Mammary epithelial cell (primary cell): ENCODE measurements at regions of chr19 and their contacts with region 1.

Region 1: DNA sequence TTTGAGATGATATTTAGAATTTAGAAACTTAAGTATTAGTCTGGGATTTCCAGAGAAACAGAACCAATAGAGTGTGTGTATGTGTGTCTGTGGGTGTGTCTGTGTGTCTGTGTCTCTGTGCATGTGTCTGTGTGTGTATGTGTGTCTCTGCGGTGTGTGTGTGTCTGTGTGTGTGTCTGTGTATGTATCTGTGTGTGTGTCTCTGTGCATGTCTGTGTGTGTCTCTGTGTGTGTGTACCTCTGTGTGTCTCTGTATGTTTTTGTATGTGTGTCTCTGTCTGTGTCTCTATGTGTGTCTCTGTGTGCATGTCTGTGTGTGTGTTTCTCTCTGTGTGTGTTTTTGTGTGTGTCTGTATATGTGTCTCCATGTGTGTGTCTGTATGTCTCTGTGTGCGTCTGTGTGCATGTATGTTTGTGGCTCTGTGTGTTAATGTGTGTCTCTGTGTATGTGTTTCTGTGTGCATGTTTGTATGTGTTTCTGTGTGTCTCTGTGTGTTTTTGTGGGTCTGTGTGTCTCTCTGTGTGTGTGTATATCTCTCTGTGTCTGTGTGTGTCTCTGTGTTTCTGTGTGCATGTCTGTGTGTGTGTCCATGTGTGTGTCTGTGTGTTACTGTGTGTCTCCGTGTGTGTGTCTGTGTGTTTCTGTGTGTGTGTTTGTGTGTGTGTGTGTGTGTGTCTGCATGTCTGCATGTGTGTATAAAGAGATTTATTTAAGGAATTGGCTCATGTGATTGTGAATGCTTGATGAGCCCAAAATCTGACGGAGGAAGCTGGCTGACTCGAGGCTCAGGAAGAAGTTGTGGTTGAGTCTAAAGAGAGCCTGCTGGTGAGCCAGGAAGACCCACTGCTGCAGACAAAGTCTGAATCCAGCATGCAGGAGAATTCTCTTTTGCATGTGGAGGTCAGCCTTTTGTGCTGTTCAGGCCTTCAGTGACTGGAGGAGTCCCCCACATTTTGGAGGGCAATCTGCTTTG is 22.2 kb downstream of the GPR42 start:
- DNase-seq: no peak
- H3K4me3 ChIP-seq: no peak overlapping the region
- H3K27ac ChIP-seq: no peak overlapping the region
- H3K4me1 ChIP-seq: no peaks in the 10 kb centered on the region
- H3K27me3 ChIP-seq: no peaks in the 10 kb centered on the region
- CTCF ChIP-seq: no peak

Region 2: GRCh38 chr19:35337097-35337983 is 55.7 kb before region 1 on chr19:
- CTCF ChIA-PET with region 1: no interaction called
- dilution Hi-C with region 1: loop called (anchors 5 kb)
- in situ Hi-C with region 1: no loop called
- intact Hi-C with region 1: no loop called
- DNase-seq: no peak
- H3K4me3 ChIP-seq: no peak overlapping the region
- H3K27ac ChIP-seq: no peak overlapping the region
- H3K4me1 ChIP-seq: peaks cover 5% of the 10 kb centered on the region
- H3K27me3 ChIP-seq: no peaks in the 10 kb centered on the region
- CTCF ChIP-seq: no peak

Region 3: GRCh38 chr19:35430409-35431144 is 37.5 kb after region 1 on chr19:
- CTCF ChIA-PET with region 1: no interaction called
- dilution Hi-C with region 1: loop called (anchors 5 kb)
- in situ Hi-C with region 1: no loop called
- intact Hi-C with region 1: no loop called
- DNase-seq: no peak
- H3K4me3 ChIP-seq: no peak overlapping the region
- H3K27ac ChIP-seq: no peak overlapping the region
- H3K4me1 ChIP-seq: no peaks in the 10 kb centered on the region
- H3K27me3 ChIP-seq: no peaks in the 10 kb centered on the region
- CTCF ChIP-seq: no peak